ENCODE measurements at regions of chr17 and their contacts with region 1.

Region 1: DNA sequence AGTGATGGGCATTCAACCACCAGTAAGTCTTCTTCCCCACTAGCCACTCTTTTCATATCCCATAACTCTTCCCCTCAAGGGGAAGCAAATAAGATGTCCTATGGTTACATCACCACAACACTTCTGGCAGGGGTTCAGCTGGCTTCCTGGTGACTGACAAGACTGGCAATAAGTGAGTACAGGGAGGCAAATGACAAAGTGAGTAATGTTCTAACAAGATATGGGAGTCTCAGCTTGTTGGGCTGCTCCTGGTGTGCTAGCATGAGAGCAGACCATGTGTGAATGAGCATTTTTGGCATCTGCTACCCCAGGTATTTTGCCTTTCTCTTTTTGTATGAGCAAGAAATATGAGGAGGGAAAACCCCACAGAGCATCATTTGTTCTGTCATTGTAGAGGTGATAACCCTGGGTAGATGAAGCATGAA is 9.9 kb downstream of the TMIGD1 start:
- DNase-seq: peak in 8 of 9 experiments; percentile 12 to 66 (median 46)
- ATAC-seq: peak; percentile 63
- H3K4me3 ChIP-seq: no peak overlapping the region
- H3K4me3 Mint-ChIP-seq: peak overlapping the region; percentile 11
- H3K27ac ChIP-seq: peak overlapping the region; percentile 0 to 60
- H3K27ac Mint-ChIP-seq: peak overlapping the region; percentile 91
- H3K4me1 ChIP-seq: peaks cover 24% of the 10 kb centered on the region
- H3K4me1 Mint-ChIP-seq: peaks cover 30% of the 10 kb centered on the region
- H3K27me3 ChIP-seq: no peaks in the 10 kb centered on the region
- H3K27me3 Mint-ChIP-seq: no peaks in the 10 kb centered on the region
- CTCF ChIP-seq: no peak

Region 2: DNA sequence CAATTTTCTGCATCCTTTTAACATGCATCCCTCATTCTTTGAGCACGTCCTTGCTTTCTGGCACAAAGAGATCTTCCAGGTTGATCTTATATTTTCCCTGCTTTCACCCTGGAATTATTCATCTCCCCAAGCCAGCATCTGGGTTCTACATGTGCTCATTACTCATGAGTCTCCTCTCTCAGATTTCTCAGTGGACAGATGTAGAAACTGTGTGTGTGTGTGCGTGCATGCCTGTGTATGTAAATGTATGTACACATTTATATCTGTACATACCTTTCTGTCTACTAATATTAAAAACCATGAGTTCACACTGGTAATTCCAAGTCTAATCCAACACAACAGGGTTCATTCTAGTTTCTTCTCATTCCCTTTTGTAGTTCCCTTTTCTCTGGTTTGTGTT is 249.2 kb before region 1 on chr17:
- CTCF ChIA-PET with region 1: no interaction called
- POLR2A ChIA-PET with region 1: no interaction called
- intact Hi-C with region 1: no loop called
- DNase-seq: no peak
- ATAC-seq: no peak
- H3K4me3 ChIP-seq: no peak overlapping the region
- H3K4me3 Mint-ChIP-seq: no peak overlapping the region
- H3K27ac ChIP-seq: no peak overlapping the region
- H3K27ac Mint-ChIP-seq: no peak overlapping the region
- H3K4me1 ChIP-seq: no peaks in the 10 kb centered on the region
- H3K4me1 Mint-ChIP-seq: no peaks in the 10 kb centered on the region
- H3K27me3 ChIP-seq: no peaks in the 10 kb centered on the region
- H3K27me3 Mint-ChIP-seq: peaks cover 16% of the 10 kb centered on the region
- CTCF ChIP-seq: no peak

Region 3: GRCh38 chr17:30291543-30292285 is 32.2 kb before region 1 on chr17 and contains the start of gene BLMH:
- CTCF ChIA-PET with region 1: interaction called, 5 read pairs
- POLR2A ChIA-PET with region 1: interaction called, 11 read pairs
- intact Hi-C with region 1: no loop called
- DNase-seq: peak; percentile 54 to 89 (median 83)
- ATAC-seq: peak; percentile 88
- H3K4me3 ChIP-seq: peak within 1 kb of the TSS; percentile 88 to 91
- H3K4me3 Mint-ChIP-seq: peak within 1 kb of the TSS; percentile 93
- H3K27ac ChIP-seq: peak within 1 kb of the TSS; percentile 38 to 44
- H3K27ac Mint-ChIP-seq: peak within 1 kb of the TSS; percentile 88
- H3K4me1 ChIP-seq: peaks cover 19% of the 10 kb centered on the region
- H3K4me1 Mint-ChIP-seq: peaks cover 18% of the 10 kb centered on the region
- H3K27me3 ChIP-seq: no peaks in the 10 kb centered on the region
- H3K27me3 Mint-ChIP-seq: no peaks in the 10 kb centered on the region
- CTCF ChIP-seq: no peak
- total RNA-seq, gene BLMH: 32.6 to 33.3 TPM

Region 4: GRCh38 chr17:30352240-30352814 is 28.4 kb after region 1 on chr17:
- CTCF ChIA-PET with region 1: no interaction called
- POLR2A ChIA-PET with region 1: no interaction called
- intact Hi-C with region 1: no loop called
- DNase-seq: no peak
- ATAC-seq: no peak
- H3K4me3 ChIP-seq: no peak overlapping the region
- H3K4me3 Mint-ChIP-seq: no peak overlapping the region
- H3K27ac ChIP-seq: no peak overlapping the region
- H3K27ac Mint-ChIP-seq: no peak overlapping the region
- H3K4me1 ChIP-seq: no peaks in the 10 kb centered on the region
- H3K4me1 Mint-ChIP-seq: no peaks in the 10 kb centered on the region
- H3K27me3 ChIP-seq: no peaks in the 10 kb centered on the region
- H3K27me3 Mint-ChIP-seq: no peaks in the 10 kb centered on the region
- CTCF ChIP-seq: no peak